IMR-90 (cell line): ENCODE measurements at regions of chr10 and their contacts with region 1.

Region 1: GRCh38 chr10:15068802-15069201 is 19.8 kb downstream of the ACBD7 start:
- DNase-seq: peak; percentile 61
- ATAC-seq: peak; percentile 93
- H3K4me3 ChIP-seq: no peak overlapping the region
- H3K27ac ChIP-seq: no peak overlapping the region
- H3K4me1 ChIP-seq: no peaks in the 10 kb centered on the region
- H3K27me3 ChIP-seq: peaks cover 3% of the 10 kb centered on the region; the same call in 1 of the 2 replicates
- CTCF ChIP-seq: no peak
- POLR2A ChIP-seq: no peak
- RAD21 ChIP-seq: no peak

Region 2: DNA sequence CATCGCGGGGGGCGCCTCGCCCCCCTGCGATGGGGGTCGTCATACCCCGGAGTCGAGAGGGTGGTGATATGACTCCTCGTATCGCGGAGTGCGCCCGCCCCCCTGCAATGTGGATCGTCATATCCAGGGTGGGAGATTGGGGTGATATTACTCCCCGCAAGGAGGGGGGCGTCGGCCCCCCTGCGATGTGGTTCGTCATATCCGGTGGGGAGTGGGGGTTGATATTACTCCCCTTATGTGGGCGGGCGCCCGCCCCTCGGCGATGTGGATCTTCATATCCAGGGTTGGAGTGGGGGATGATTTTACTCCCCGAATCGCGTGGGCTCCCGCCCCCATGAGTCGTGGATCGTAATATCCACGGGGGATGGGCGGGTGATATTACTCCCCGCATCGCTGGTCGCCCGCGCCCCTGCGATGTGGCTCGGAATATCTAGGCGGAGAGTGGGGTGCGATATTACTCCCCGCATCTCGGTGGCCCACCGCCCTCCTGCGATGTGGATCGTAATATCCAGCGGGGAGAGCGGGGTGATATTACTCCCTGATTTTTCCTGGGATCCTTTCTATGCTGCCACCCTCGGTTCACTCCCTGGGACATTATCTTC is 72.7 kb before region 1 on chr10:
- CTCF ChIA-PET with region 1: no interaction called
- POLR2A ChIA-PET with region 1: no interaction called
- dilution Hi-C with region 1: no loop called
- in situ Hi-C with region 1: no loop called
- intact Hi-C with region 1: no loop called
- DNase-seq: no peak
- ATAC-seq: no peak
- H3K4me3 ChIP-seq: peak overlapping the region; percentile 69
- H3K27ac ChIP-seq: no peak overlapping the region
- H3K4me1 ChIP-seq: no peaks in the 10 kb centered on the region
- H3K27me3 ChIP-seq: peaks cover 7% of the 10 kb centered on the region
- CTCF ChIP-seq: no peak
- POLR2A ChIP-seq: no peak
- RAD21 ChIP-seq: no peak

Region 3: GRCh38 chr10:15015451-15015850 is 53.4 kb before region 1 on chr10:
- CTCF ChIA-PET with region 1: no interaction called
- POLR2A ChIA-PET with region 1: no interaction called
- dilution Hi-C with region 1: no loop called
- in situ Hi-C with region 1: no loop called
- intact Hi-C with region 1: loop called (anchors 5 kb)
- DNase-seq: no peak
- ATAC-seq: no peak
- H3K4me3 ChIP-seq: no peak overlapping the region
- H3K27ac ChIP-seq: no peak overlapping the region
- H3K4me1 ChIP-seq: no peaks in the 10 kb centered on the region
- H3K27me3 ChIP-seq: peaks cover 8% of the 10 kb centered on the region
- CTCF ChIP-seq: no peak
- POLR2A ChIP-seq: no peak
- RAD21 ChIP-seq: no peak